ENCODE measurements at regions of chr11 and their contacts with region 1.

Region 1: GRCh38 chr11:35617687-35618496 is at the start of gene FJX1:
- DNase-seq: peak; percentile 23 to 28
- ATAC-seq: peak; percentile 36
- total RNA-seq, gene FJX1: 0.50 TPM in 1 of 2 donors, not detected in the other

Region 2: GRCh38 chr11:36000616-36001190 is 382.8 kb after region 1 on chr11:
- intact Hi-C with region 1: no loop called
- DNase-seq: no peak
- ATAC-seq: no peak

Region 3: DNA sequence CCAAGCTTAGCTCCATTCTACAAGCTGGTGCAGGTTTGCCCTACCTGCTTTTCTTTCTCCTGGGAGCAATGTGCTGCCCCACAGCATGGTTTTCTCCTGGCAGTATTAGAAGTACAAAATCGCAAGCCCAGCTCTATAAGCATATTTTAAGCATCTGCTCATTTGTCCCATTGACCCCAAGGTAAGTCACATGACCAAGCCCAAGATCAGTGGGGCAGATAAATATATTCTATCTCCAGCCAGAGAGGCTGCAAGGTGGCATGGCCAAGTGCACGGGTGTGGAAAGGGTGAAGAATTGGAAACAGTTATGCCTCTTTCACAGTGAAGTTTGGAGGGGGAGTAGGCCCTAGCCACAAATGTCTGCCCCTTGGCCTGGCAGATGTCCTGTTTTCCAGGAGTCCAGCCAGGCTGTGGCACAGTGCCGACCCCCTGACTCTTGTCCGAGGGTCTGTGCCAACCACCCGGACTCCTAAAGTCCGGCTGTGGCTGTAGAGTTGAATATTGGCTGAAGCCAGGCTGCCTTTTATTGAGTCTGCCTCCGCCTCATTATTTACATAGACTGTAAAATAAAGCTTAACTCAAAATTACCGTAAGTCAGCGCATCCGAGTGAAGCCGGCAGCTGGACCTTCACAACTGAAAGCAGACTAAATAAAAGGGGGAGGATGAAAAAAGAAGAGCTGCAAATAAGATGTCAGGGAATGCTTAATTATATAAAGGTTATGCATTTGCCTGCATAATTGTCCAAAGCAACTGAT is 505.6 kb after region 1 on chr11:
- intact Hi-C with region 1: loop called in 1 of 2 experiments (anchors 10 kb)
- DNase-seq: no peak
- ATAC-seq: no peak

Region 4: GRCh38 chr11:36265793-36266628 is 648.1 kb after region 1 on chr11:
- intact Hi-C with region 1: loop called in 1 of 2 experiments (anchors 5 kb)
- DNase-seq: peak in 1 of 2 donors; percentile 69
- ATAC-seq: peak; percentile 82

Region 5: GRCh38 chr11:36577859-36578258 is 960.0 kb after region 1 on chr11:
- intact Hi-C with region 1: no loop called
- DNase-seq: no peak
- ATAC-seq: no peak